ENCODE measurements at regions of chr1 and their contacts with region 1.

Region 1: GRCh38 chr1:190391582-190391981 is 86.1 kb downstream of the BRINP3 start:
- DNase-seq: no peak

Region 2: GRCh38 chr1:192357924-192358323 is 1966.3 kb after region 1 on chr1:
- intact Hi-C with region 1: loop called in 1 of 2 experiments (anchors 5 kb)
- DNase-seq: no peak

Measured in posterior vena cava (tissue), 2 donors.